Activated CD4-positive, alpha-beta T cell treated with anti-CD3 and anti-CD28 coated beads for 36 hours (primary cell): ENCODE measurements at regions of chr2 and their contacts with region 1.

Region 1: GRCh38 chr2:101704046-101704466 is 6.5 kb downstream of the MAP4K4 start:
- DNase-seq: peak; percentile 54
- ATAC-seq: peak; percentile 18
- H3K4me3 Mint-ChIP-seq: peak overlapping the region; percentile 53
- H3K27ac Mint-ChIP-seq: peak overlapping the region; percentile 90
- H3K4me1 Mint-ChIP-seq: peaks cover 74% of the 10 kb centered on the region
- H3K27me3 Mint-ChIP-seq: no peaks in the 10 kb centered on the region

Region 2: DNA sequence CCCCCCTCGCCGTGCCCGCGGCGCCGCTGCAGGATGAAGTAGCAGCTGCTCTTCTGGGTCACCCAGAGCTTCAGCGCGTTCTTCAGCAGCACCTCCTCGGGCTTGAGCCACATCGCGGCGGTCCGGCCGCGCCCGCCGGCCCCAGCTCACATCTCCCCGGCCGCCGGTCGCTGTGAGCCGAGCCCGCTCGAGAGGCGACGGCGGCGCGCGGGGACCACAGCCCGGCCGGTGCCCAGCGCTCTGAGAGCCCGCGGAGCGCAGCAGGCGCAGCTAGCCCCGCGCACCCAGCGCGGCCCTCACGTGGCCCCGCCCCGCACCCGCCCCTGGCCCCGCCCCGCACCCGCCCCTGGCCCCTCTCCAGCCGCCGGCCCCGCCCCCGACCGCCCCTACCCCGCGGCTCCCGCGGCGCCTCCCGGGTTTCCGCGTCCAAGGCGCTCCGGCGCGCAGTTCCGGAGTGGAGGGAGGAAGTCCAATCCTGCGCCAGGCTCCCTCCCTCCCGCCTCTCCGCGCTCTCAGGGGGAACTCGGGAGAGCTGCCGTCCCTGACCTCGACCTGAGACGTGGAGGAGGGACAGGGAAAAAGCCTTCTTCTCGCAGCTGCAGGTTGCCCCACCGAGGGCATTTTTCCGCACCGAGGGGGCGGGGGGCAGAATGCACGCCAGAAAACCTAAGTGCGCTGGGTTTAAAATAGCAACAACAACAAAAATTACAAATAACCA is 552.8 kb before region 1 on chr2 and contains the start of gene TBC1D8:
- CTCF ChIA-PET with region 1: no interaction called
- POLR2A ChIA-PET with region 1: no interaction called
- intact Hi-C with region 1: loop called in 1 of 2 experiments (anchors 5 kb)
- DNase-seq: peak; percentile 82
- ATAC-seq: peak; percentile 93
- H3K4me3 Mint-ChIP-seq: peak within 1 kb of the TSS; percentile 71
- H3K27ac Mint-ChIP-seq: peak within 1 kb of the TSS; percentile 55
- H3K4me1 Mint-ChIP-seq: peaks cover 24% of the 10 kb centered on the region
- H3K27me3 Mint-ChIP-seq: peaks cover 21% of the 10 kb centered on the region
- total RNA-seq, gene TBC1D8: 3.3 to 3.4 TPM

Region 3: GRCh38 chr2:101173707-101174295 is 530.3 kb before region 1 on chr2:
- CTCF ChIA-PET with region 1: no interaction called
- POLR2A ChIA-PET with region 1: no interaction called
- intact Hi-C with region 1: no loop called
- DNase-seq: peak; percentile 74
- ATAC-seq: peak; percentile 100
- H3K4me3 Mint-ChIP-seq: no peak overlapping the region
- H3K27ac Mint-ChIP-seq: peak overlapping the region; percentile 89
- H3K4me1 Mint-ChIP-seq: peaks cover 24% of the 10 kb centered on the region
- H3K27me3 Mint-ChIP-seq: no peaks in the 10 kb centered on the region

Region 4: DNA sequence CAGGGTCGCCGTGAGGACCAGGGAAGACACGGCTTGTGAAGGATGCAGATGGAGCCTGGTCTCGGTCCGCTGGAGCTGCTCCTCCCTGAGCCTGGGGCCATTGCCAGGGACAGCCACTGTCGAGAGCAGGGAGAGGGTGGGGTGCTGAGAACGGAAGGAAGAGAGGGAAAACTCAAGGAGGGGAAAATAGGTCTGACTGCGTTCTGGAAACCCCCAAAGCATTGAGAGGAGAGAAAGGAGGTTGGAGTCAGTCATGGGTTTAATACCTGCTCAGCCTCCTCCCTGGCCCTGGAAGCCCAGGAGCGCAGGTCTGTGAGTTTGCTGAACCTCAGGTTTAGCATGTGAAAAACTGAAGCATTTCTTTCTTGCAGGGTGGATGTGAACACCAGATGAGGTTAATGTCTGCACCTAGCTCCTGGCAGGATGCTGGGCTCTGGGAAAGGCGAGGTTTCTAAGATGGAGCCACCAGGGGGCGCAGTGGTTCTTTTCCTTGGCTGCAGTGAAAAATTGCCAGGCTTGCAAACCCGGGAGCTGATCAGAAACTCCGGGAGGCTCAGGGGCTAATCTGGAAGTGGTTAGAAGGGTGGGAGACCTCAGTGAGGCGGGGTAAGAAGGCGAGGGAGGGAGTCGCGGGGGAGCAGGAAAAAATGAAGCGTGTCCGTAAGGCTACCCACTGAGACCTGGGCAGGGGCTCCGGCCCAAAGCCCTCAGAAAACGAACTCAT is 362.0 kb before region 1 on chr2:
- CTCF ChIA-PET with region 1: no interaction called
- POLR2A ChIA-PET with region 1: no interaction called
- intact Hi-C with region 1: no loop called
- DNase-seq: peak; percentile 85
- ATAC-seq: peak; percentile 74
- H3K4me3 Mint-ChIP-seq: no peak overlapping the region
- H3K27ac Mint-ChIP-seq: no peak overlapping the region
- H3K4me1 Mint-ChIP-seq: peaks cover 18% of the 10 kb centered on the region
- H3K27me3 Mint-ChIP-seq: no peaks in the 10 kb centered on the region

Region 5: DNA sequence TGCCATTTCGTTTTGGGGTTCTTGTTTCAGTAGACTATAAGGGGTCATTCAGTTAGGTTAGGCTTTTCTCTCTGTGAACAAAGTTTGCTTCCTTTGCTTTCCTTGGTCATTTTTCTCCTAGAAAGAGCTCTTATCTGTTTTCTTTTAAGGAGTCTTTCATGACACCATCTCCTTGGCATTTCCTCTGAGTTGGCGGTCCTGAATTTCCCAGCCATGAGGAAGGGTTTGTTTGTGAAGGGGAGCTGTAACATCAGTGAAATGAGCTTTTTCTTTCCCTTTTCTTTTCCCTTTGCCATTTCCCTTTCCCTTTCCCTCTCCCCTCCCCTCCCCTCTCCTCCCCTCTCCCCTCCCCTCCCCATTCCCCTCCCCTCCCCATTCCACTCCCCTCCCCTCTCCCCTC is 55.1 kb after region 1 on chr2:
- CTCF ChIA-PET with region 1: no interaction called
- POLR2A ChIA-PET with region 1: no interaction called
- intact Hi-C with region 1: loop called in 1 of 2 experiments (anchors 2 kb)
- DNase-seq: no peak
- ATAC-seq: no peak
- H3K4me3 Mint-ChIP-seq: no peak overlapping the region
- H3K27ac Mint-ChIP-seq: no peak overlapping the region
- H3K4me1 Mint-ChIP-seq: peaks cover 73% of the 10 kb centered on the region
- H3K27me3 Mint-ChIP-seq: no peaks in the 10 kb centered on the region

Region 6: DNA sequence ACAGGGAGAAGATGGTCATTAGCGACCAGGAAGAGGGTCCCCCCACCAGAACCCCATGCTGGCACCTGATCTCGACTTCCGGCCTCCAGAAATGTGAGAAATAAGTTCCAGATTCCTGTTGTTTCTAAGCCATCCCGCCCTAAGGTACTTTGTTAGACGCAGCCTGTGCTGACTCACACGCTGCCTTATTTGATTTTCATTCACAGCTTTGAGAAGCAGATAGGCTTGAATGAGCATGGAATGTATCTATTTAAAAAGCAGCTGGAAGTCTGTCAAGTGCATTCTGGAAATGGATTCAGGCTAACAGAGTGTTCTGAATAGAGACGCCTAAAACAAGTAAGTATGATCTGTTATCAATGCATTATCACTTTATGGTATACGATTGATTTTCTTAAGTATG is 279.4 kb after region 1 on chr2:
- CTCF ChIA-PET with region 1: no interaction called
- POLR2A ChIA-PET with region 1: no interaction called
- intact Hi-C with region 1: no loop called
- DNase-seq: no peak
- ATAC-seq: no peak
- H3K4me3 Mint-ChIP-seq: no peak overlapping the region
- H3K27ac Mint-ChIP-seq: no peak overlapping the region
- H3K4me1 Mint-ChIP-seq: peaks cover 16% of the 10 kb centered on the region
- H3K27me3 Mint-ChIP-seq: no peaks in the 10 kb centered on the region